A549 (cell line): ENCODE measurements at regions of chr14 and their contacts with region 1.

Region 1: DNA sequence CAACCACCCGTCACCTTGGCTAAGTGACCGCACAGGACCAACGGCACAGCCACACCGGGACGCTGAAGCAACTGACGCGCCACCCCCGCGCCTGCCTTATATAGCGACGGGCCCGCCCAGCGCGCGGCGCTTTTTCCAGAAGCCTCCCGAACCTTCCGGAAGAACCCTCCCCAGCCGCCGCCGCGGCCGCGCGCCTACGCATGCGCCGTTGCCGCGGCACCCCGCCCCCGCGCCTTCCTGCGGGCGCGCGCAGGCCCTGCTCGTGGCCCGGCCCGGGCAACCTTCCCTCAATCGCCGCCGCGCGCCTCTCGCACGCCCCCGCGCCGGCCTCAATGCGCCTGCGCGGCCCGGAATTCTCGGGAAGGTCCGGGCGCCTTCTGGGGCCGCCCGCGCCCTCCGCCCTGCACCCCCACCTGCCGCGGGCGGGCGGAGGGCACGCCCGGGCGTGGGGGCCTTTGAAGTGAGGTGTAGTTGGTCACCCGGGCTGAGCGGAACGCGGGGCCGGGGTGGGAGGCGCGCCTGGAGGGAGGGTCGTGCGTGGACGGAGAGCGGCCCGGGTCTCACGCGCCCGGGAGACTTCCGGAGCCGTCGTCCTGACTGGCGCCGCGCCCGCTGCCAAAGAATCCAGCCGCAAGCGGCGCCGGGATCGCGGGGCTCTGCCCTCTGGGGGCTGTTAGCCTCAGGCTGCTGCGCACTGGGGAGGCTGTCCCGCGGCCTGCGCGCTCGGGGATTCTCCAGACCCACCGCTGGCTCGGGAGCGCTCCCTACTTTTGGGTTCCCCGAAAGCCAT is at the start of gene HSP90AA1:
- DNase-seq: peak; percentile 85 to 93
- ATAC-seq: peak; percentile 84 to 85
- H3K4me3 ChIP-seq: peak within 1 kb of the TSS; percentile 97
- H3K27ac ChIP-seq: peak within 1 kb of the TSS; percentile 95 to 97
- H3K4me1 ChIP-seq: peaks cover 39% of the 10 kb centered on the region
- CTCF ChIP-seq: no peak
- EP300 ChIP-seq: no peak
- POLR2A ChIP-seq: peak; percentile 100
- RAD21 ChIP-seq: no peak
- polyA plus RNA-seq, gene HSP90AA1: 944 and 1,087 TPM in 2 replicates

Region 2: GRCh38 chr14:102063091-102063802 is 23.9 kb before region 1 on chr14:
- CTCF ChIA-PET with region 1: interaction called, 18 read pairs
- POLR2A ChIA-PET with region 1: no interaction called
- DNase-seq: peak; percentile 81 to 89
- ATAC-seq: peak; percentile 83 to 93
- H3K4me3 ChIP-seq: no peak overlapping the region
- H3K27ac ChIP-seq: no peak overlapping the region
- H3K4me1 ChIP-seq: no peaks in the 10 kb centered on the region
- CTCF ChIP-seq: peak; percentile 51
- EP300 ChIP-seq: no peak
- POLR2A ChIP-seq: no peak
- RAD21 ChIP-seq: peak; percentile 59 to 60

Region 3: GRCh38 chr14:102220031-102220430 is 132.9 kb after region 1 on chr14:
- CTCF ChIA-PET with region 1: no interaction called
- POLR2A ChIA-PET with region 1: interaction called, 13 read pairs
- DNase-seq: no peak
- ATAC-seq: no peak
- H3K4me3 ChIP-seq: no peak overlapping the region
- H3K27ac ChIP-seq: no peak overlapping the region
- H3K4me1 ChIP-seq: no peaks in the 10 kb centered on the region
- CTCF ChIP-seq: no peak
- EP300 ChIP-seq: no peak
- POLR2A ChIP-seq: no peak
- RAD21 ChIP-seq: no peak